CD4-positive, alpha-beta memory T cell (primary cell): ENCODE measurements at regions of chr2 and their contacts with region 1.

Region 1: DNA sequence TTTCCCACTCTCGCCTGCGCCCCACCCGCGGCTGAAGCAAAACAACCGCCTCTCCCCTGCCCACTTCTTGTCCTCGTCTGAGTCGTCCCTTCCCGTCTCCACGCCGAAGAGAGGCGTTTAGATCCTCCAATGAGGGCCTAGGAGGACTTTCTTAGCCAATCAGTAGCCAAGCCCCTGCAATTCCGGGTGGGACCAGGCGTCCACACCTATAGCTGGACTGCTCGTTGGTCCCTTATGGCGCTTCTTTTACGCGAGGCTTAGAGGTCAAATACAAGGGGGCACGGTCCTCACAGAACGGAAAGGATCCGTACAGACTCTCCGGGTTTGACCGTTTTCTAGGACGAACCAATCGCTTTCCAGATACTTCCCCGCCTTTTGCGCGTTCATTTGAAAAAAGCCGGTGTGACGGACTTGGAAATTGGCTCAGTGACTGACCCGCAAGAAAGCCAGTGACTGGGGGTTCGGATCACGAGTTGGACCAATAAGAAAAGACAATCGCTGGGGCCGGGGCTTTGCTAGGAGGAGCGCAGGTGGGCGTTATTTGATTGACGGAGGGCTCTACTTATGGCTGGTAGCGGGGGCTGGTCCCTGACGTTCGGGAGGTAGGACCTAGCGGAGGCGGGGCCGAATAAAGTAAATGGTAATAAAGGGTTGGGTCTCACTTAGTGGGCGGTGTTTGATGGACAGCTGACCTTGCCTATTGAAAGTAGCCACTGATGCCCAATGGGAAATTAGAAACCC is 565 bp upstream of the PPM1B start:
- DNase-seq: peak; percentile 96 to 100 (median 99)
- H3K4me3 ChIP-seq: peak overlapping the region; percentile 81 to 99
- H3K4me3 Mint-ChIP-seq: peak overlapping the region; percentile 96 to 100 (median 100)
- H3K27ac ChIP-seq: peak overlapping the region; percentile 98
- H3K27ac Mint-ChIP-seq: peak overlapping the region; percentile 97 to 100 (median 100)
- H3K4me1 ChIP-seq: peaks cover 37% of the 10 kb centered on the region
- H3K4me1 Mint-ChIP-seq: peaks cover 19 to 44% (median 35%) of the 10 kb centered on the region in 4 donors
- H3K27me3 ChIP-seq: no peaks in the 10 kb centered on the region
- H3K27me3 Mint-ChIP-seq: no peaks in the 10 kb centered on the region

Region 2: DNA sequence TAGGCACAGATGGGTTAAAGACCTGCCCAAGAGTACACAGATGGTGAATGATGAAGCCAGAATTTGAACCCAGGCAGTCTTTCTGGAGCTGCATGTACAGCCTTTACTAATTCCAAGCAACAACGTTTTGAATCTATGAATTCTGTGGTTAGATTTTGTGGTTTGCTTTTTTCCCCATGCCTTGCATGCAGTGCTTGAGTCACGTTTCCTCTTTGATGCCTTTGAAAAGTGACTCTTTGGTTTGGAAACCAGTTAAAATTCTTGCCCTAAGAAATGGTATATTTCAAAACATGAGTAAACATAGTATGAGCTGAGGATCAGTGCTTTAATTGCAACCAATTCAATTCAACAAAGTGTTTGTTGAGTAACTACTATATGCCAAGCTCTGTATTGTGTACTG is 47.7 kb before region 1 on chr2:
- CTCF ChIA-PET with region 1: no interaction called
- POLR2A ChIA-PET with region 1: interaction called, 6 read pairs
- intact Hi-C with region 1: loop called (anchors 1 kb)
- DNase-seq: peak; percentile 33 to 73 (median 46)
- H3K4me3 ChIP-seq: no peak overlapping the region
- H3K4me3 Mint-ChIP-seq: peak overlapping the region in 4 of 8 donors; percentile 43 to 74 (median 56)
- H3K27ac ChIP-seq: no peak overlapping the region
- H3K27ac Mint-ChIP-seq: peak overlapping the region in 2 of 7 donors; percentile 44 to 66
- H3K4me1 ChIP-seq: peaks cover 12% of the 10 kb centered on the region
- H3K4me1 Mint-ChIP-seq: peaks cover 8 to 28% (median 16%) of the 10 kb centered on the region in 4 donors
- H3K27me3 ChIP-seq: no peaks in the 10 kb centered on the region
- H3K27me3 Mint-ChIP-seq: peaks cover 0 to 4% of the 10 kb centered on the region in 2 donors

Region 3: DNA sequence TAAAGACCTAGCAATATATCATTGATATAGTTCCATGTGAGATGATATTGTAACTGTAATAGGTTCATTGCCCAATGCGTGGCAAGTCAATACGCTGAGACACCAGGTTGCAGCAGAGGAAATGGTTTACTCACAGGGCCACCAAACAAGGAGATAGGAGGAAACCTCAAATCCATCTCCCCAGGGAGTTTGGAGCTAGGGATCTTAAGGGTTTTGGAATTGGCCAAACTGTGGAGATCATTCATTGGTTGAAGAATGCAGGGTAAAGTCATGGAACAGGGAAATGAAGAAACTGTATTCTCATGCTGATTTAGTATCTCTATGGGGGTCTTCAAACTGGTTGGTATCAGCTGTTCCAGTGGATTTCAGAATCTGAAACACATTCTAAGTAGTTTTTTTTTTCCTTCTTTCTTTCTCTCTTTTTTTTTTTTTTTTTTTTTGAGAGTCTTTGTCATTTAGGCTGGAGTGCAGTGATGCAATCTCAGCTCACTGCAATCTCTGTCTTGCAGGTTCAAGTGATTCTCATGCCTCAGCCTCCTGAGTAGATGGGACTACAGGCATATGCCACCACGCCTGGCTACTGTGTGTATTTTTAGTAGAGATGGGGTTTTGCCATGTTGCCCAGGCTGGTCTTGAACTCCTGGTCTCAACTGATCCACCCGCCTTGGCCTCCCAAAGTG is 30.1 kb before region 1 on chr2:
- CTCF ChIA-PET with region 1: no interaction called
- POLR2A ChIA-PET with region 1: no interaction called
- intact Hi-C with region 1: no loop called
- DNase-seq: no peak
- H3K4me3 ChIP-seq: no peak overlapping the region
- H3K4me3 Mint-ChIP-seq: no peak overlapping the region
- H3K27ac ChIP-seq: no peak overlapping the region
- H3K27ac Mint-ChIP-seq: peak overlapping the region in 1 of 7 donors; percentile 21
- H3K4me1 ChIP-seq: peaks cover 3% of the 10 kb centered on the region
- H3K4me1 Mint-ChIP-seq: peaks cover 0 to 9% (median 4%) of the 10 kb centered on the region in 4 donors
- H3K27me3 ChIP-seq: no peaks in the 10 kb centered on the region
- H3K27me3 Mint-ChIP-seq: peaks cover 0 to 1% of the 10 kb centered on the region in 2 donors

Region 4: GRCh38 chr2:44233450-44234128 is 65.5 kb after region 1 on chr2:
- CTCF ChIA-PET with region 1: interaction called, 4 read pairs
- POLR2A ChIA-PET with region 1: interaction called, 27 read pairs
- intact Hi-C with region 1: loop called (anchors 1 kb)
- DNase-seq: no peak
- H3K4me3 ChIP-seq: no peak overlapping the region
- H3K4me3 Mint-ChIP-seq: no peak overlapping the region
- H3K27ac ChIP-seq: no peak overlapping the region
- H3K27ac Mint-ChIP-seq: peak overlapping the region in 3 of 7 donors; percentile 7 to 64 (median 10)
- H3K4me1 ChIP-seq: peaks cover 19% of the 10 kb centered on the region
- H3K4me1 Mint-ChIP-seq: peaks cover 19 to 30% (median 22%) of the 10 kb centered on the region in 4 donors
- H3K27me3 ChIP-seq: no peaks in the 10 kb centered on the region
- H3K27me3 Mint-ChIP-seq: no peaks in the 10 kb centered on the region

Region 5: GRCh38 chr2:44254023-44254422 is 85.9 kb after region 1 on chr2:
- CTCF ChIA-PET with region 1: no interaction called
- POLR2A ChIA-PET with region 1: no interaction called
- intact Hi-C with region 1: no loop called
- DNase-seq: no peak
- H3K4me3 ChIP-seq: no peak overlapping the region
- H3K4me3 Mint-ChIP-seq: no peak overlapping the region
- H3K27ac ChIP-seq: no peak overlapping the region
- H3K27ac Mint-ChIP-seq: no peak overlapping the region
- H3K4me1 ChIP-seq: no peaks in the 10 kb centered on the region
- H3K4me1 Mint-ChIP-seq: no peaks in the 10 kb centered on the region
- H3K27me3 ChIP-seq: no peaks in the 10 kb centered on the region
- H3K27me3 Mint-ChIP-seq: peaks cover 8 to 20% of the 10 kb centered on the region in 2 donors